ENCODE measurements at regions of chr6 and their contacts with region 1.

Region 1: DNA sequence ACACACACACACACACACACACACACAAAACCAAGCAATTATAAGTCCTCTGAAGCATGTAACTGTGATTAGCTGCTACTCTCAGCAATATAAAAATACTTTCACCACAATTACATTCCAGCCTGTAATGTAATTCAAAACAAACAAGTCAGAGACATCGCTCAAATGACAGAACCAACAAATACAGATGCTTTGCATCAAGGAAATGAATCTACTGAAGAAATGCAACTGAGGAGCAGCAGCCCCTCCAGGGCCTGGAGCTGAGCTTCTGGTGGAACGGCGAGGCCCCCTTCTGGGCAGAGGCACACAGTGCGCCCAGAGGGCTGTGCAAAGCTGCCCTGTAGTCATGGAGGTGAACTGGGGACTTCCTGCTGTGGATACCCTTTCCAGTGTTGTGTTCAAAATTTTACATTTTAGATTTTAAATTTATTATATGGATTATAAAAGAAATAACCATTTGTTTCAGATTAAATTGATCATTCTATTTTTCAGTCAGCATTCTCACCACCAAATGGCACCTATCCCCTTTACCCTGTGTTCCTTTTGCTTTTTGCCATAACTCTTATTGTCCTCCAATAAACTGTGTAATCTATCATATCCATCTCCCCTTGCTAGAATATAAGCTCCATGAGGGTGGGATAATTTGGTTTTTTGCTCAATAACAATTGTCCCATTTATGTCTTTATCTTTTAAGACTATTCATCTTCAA is 23.2 kb downstream of the ADAT2 start:
- DNase-seq: peak; percentile 70
- H3K4me3 ChIP-seq: no peak overlapping the region
- H3K27ac ChIP-seq: no peak overlapping the region
- H3K4me1 ChIP-seq: peaks cover 12% of the 10 kb centered on the region
- H3K27me3 ChIP-seq: no peaks in the 10 kb centered on the region
- CTCF ChIP-seq: peak; percentile 98 to 100

Region 2: GRCh38 chr6:142474531-142475289 is 952.6 kb before region 1 on chr6:
- CTCF ChIA-PET with region 1: interaction called, 3 read pairs
- dilution Hi-C with region 1: no loop called
- in situ Hi-C with region 1: no loop called
- intact Hi-C with region 1: loop called (anchors 1 kb)
- DNase-seq: peak; percentile 68
- H3K4me3 ChIP-seq: peak overlapping the region in 1 of 3 experiments; percentile 32
- H3K27ac ChIP-seq: no peak overlapping the region
- H3K4me1 ChIP-seq: peaks cover 3% of the 10 kb centered on the region
- H3K27me3 ChIP-seq: no peaks in the 10 kb centered on the region
- CTCF ChIP-seq: peak; percentile 63 to 65

Region 3: GRCh38 chr6:142838821-142839685 is 588.2 kb before region 1 on chr6:
- CTCF ChIA-PET with region 1: no interaction called
- dilution Hi-C with region 1: no loop called
- in situ Hi-C with region 1: no loop called
- intact Hi-C with region 1: loop called (anchors 5 kb)
- DNase-seq: peak; percentile 93
- H3K4me3 ChIP-seq: peak overlapping the region in 2 of 3 experiments; percentile 23 to 34
- H3K27ac ChIP-seq: peak overlapping the region; percentile 90
- H3K4me1 ChIP-seq: peaks cover 33% of the 10 kb centered on the region
- H3K27me3 ChIP-seq: no peaks in the 10 kb centered on the region
- CTCF ChIP-seq: no peak

Region 4: GRCh38 chr6:143060354-143060805 is 366.9 kb before region 1 on chr6:
- CTCF ChIA-PET with region 1: no interaction called
- dilution Hi-C with region 1: no loop called
- in situ Hi-C with region 1: no loop called
- intact Hi-C with region 1: loop called (anchors 5 kb)
- DNase-seq: peak; percentile 82
- H3K4me3 ChIP-seq: peak overlapping the region; percentile 65 to 88 (median 66)
- H3K27ac ChIP-seq: peak overlapping the region; percentile 98
- H3K4me1 ChIP-seq: peaks cover 47% of the 10 kb centered on the region
- H3K27me3 ChIP-seq: no peaks in the 10 kb centered on the region
- CTCF ChIP-seq: peak in 1 of 2 donors; percentile 32

Region 5: GRCh38 chr6:143232849-143233248 is 194.4 kb before region 1 on chr6:
- CTCF ChIA-PET with region 1: interaction called, 3 read pairs
- dilution Hi-C with region 1: no loop called
- in situ Hi-C with region 1: loop called (anchors 25 kb)
- intact Hi-C with region 1: loop called (anchors 1 kb)
- DNase-seq: peak; percentile 20
- H3K4me3 ChIP-seq: no peak overlapping the region
- H3K27ac ChIP-seq: no peak overlapping the region
- H3K4me1 ChIP-seq: peaks cover 7% of the 10 kb centered on the region
- H3K27me3 ChIP-seq: no peaks in the 10 kb centered on the region
- CTCF ChIP-seq: peak; percentile 70 to 91

Region 6: GRCh38 chr6:143410859-143411270 is 16.4 kb before region 1 on chr6:
- CTCF ChIA-PET with region 1: interaction called, 13 read pairs
- dilution Hi-C with region 1: no loop called
- in situ Hi-C with region 1: no loop called
- intact Hi-C with region 1: no loop called
- DNase-seq: peak; percentile 88
- H3K4me3 ChIP-seq: no peak overlapping the region
- H3K27ac ChIP-seq: peak overlapping the region; percentile 78
- H3K4me1 ChIP-seq: peaks cover 31% of the 10 kb centered on the region
- H3K27me3 ChIP-seq: no peaks in the 10 kb centered on the region
- CTCF ChIP-seq: no peak

Region 7: GRCh38 chr6:143620447-143620846 is 193.2 kb after region 1 on chr6:
- CTCF ChIA-PET with region 1: no interaction called
- dilution Hi-C with region 1: no loop called
- in situ Hi-C with region 1: no loop called
- intact Hi-C with region 1: no loop called
- DNase-seq: no peak
- H3K4me3 ChIP-seq: no peak overlapping the region
- H3K27ac ChIP-seq: no peak overlapping the region
- H3K4me1 ChIP-seq: peaks cover 13% of the 10 kb centered on the region
- H3K27me3 ChIP-seq: no peaks in the 10 kb centered on the region
- CTCF ChIP-seq: no peak

Region 8: DNA sequence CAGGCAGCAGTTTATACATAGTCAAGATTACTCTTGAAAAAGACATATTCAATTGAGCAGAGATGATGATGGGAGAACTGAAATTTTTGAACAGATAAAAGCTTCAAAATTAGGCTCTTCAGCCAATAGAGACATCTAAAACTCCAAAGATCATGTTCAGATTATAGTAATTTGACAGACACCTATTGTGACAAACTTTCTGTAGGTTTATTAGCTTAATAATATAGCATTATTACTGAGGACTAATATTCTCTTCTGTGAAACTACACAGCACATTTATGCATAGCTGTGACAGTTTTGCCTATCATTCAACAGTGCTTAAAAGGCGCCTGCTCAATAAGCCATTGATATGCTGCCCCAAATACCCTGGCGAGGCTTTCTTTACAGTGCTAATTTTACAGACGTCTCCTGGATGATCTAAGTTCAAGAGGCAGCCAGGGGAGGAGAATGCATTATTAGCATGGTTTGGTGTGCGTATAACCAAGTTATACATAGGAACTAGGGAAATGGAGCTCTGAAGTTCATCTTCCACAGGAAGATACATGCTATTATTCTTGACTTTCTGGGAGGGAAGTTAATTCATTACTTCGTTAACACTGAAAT is 559.3 kb after region 1 on chr6:
- CTCF ChIA-PET with region 1: no interaction called
- dilution Hi-C with region 1: no loop called
- in situ Hi-C with region 1: no loop called
- intact Hi-C with region 1: no loop called
- DNase-seq: no peak
- H3K4me3 ChIP-seq: no peak overlapping the region
- H3K27ac ChIP-seq: no peak overlapping the region
- H3K4me1 ChIP-seq: no peaks in the 10 kb centered on the region
- H3K27me3 ChIP-seq: peaks cover 3% of the 10 kb centered on the region
- CTCF ChIP-seq: no peak